ENCODE measurements at regions of chr22 and their contacts with region 1.

Region 1: DNA sequence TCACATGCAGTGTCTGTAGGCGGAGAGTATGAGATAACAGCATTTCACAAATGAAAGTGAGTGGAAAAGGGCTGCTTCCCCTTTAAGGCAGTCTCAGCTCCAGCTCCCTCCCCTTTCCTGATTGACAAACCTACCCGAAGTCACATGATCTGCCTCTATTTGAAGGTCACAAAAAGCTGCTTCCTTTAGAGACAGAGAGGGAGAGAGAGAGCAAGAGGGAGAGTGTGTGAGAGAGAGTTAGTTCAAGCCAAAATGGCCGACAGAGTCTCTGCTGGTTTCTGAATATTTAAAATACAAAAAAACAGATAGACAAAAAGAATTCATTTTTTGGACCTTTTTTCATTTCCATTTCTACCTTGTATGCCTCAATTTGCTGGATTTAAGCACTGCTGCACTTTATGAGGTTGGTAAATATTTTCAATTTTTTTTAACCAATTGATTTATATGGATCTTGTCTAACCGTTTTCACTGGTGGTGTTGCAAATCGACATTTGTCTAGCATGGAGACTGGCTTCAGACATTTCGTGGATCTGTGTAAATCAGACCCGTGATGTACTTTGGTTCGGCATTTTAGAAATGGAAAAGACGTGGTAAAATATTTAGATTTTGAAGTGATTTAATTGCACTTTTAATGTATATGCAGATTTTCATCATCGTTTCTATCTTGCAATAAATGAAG is at the start of gene TNRC6B:
- DNase-seq: peak; percentile 99
- total RNA-seq, gene TNRC6B: 11.1 TPM in 2 replicates

Region 2: GRCh38 chr22:39634671-39635405 is 543.0 kb before region 1 on chr22:
- in situ Hi-C with region 1: no loop called
- DNase-seq: no peak

Region 3: DNA sequence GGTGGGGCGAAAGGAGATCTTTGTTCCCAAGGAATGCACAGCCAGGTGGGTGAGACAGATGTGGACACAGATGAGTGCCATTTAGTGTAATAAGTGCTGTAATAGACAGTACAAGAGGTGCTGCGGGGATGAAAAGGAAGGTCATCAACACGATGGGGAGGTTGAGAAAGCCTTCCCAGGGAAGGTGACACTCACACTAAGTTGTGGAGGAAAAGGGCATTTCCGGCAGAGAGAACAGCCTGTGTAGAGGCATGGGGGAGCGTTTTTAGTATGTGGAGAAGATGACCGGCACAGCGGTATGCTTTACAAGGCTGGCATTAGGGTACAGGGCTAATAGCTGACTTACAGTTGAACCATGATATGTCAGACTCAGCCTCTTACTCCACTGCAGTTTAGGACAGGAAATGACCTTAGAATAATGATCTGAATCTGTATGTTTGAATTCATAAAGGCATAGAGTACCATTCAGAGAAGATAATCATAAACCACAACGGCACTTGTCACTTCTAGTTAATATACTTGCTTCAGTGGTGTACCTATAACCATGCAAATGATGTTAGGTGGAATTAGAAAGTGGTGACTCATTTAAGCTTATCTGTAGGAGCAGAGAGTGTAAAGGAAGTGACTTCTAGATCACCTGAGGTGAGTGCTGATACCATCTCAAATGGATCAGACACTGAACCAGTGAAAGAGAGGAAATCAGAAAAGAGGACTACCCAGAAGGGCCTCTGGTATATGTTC is 122.6 kb before region 1 on chr22:
- in situ Hi-C with region 1: loop called (anchors 25 kb)
- DNase-seq: no peak